Left lung (tissue), 14 donors: ENCODE measurements at regions of chr9 and their contacts with region 1.

Region 1: DNA sequence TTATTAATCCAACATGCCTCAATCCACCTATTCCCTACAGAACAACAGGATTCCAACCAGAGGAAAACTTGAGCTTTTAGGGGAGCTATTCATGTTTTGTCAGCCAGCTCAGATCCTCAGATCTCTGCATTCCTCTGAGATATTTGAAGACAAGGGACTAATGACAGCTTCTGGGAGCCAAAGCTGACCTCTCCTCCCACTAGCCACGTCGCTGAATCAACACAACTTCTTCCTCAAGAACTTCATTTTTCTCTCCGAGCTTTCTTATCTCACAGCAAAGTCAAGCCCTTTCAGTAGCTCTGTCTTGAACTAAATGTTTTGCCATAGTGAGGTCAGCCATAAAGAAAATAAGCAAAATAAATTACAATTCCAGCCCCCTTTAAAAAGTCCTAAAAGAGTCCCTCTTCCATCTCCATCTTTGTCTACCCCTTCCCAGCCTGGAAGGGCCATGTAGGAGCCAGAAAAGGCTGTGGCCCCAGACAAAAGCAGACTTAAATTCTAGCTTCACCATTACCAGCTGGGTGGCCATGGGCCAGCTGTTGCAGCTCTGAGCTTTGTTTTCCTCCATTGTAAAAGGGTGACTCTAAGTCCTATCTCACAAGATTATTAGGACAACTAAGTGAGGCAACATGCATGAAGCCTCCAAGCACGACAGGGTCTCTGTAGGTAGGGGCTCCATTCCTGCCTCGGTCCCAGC is 65.0 kb downstream of the HSD17B3 start:
- DNase-seq: no peak
- ATAC-seq: no peak
- H3K4me3 ChIP-seq: no peak overlapping the region
- H3K27ac ChIP-seq: no peak overlapping the region
- H3K4me1 ChIP-seq: no peaks in the 10 kb centered on the region
- H3K27me3 ChIP-seq: no peaks in the 10 kb centered on the region
- CTCF ChIP-seq: no peak

Region 2: GRCh38 chr9:96309850-96310249 is 72.8 kb after region 1 on chr9:
- intact Hi-C with region 1: loop called in 1 of 2 experiments (anchors 5 kb)
- DNase-seq: no peak
- ATAC-seq: no peak
- H3K4me3 ChIP-seq: no peak overlapping the region
- H3K27ac ChIP-seq: no peak overlapping the region
- H3K4me1 ChIP-seq: no peaks in the 10 kb centered on the region
- H3K27me3 ChIP-seq: no peaks in the 10 kb centered on the region
- CTCF ChIP-seq: no peak